ENCODE measurements at regions of chr20 and their contacts with region 1.

Region 1: GRCh38 chr20:9616833-9617489 is 102.6 kb downstream of the LAMP5 start:
- DNase-seq: no peak
- H3K4me3 ChIP-seq: no peak overlapping the region
- H3K27me3 ChIP-seq: peaks cover 10% of the 10 kb centered on the region
- CTCF ChIP-seq: peak; percentile 86

Region 2: GRCh38 chr20:9498322-9498721 is 118.6 kb before region 1 on chr20:
- CTCF ChIA-PET with region 1: no interaction called
- POLR2A ChIA-PET with region 1: no interaction called
- DNase-seq: no peak
- H3K4me3 ChIP-seq: no peak overlapping the region
- H3K27me3 ChIP-seq: peaks cover 2% of the 10 kb centered on the region; the same call in 1 of the 2 replicates
- CTCF ChIP-seq: no peak

Region 3: GRCh38 chr20:9597545-9597944 is 19.4 kb before region 1 on chr20:
- CTCF ChIA-PET with region 1: interaction called, 17 read pairs
- POLR2A ChIA-PET with region 1: no interaction called
- DNase-seq: no peak
- H3K4me3 ChIP-seq: no peak overlapping the region
- H3K27me3 ChIP-seq: no peaks in the 10 kb centered on the region
- CTCF ChIP-seq: no peak

Region 4: DNA sequence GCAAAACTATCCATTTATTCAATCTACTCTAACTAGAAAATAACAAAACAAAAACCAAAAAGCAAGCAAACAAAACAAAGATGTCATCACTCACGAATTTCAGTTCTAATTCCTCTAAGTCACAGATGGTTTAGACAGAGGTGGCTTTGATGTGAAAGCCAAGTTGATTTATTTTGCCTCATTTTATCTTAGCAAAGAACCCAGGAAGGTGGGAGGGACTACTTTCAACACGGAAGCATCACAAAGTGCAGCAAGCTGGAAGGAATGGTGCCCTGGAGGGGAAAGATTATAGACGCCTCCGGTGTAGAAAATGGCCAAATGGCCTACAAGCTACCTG is 14.1 kb before region 1 on chr20:
- CTCF ChIA-PET with region 1: interaction called, 17 read pairs
- POLR2A ChIA-PET with region 1: no interaction called
- DNase-seq: no peak
- H3K4me3 ChIP-seq: no peak overlapping the region
- H3K27me3 ChIP-seq: peaks cover 5% of the 10 kb centered on the region; the same call in 1 of the 2 replicates
- CTCF ChIP-seq: no peak

Region 5: GRCh38 chr20:9912858-9913434 is 296.0 kb after region 1 on chr20:
- CTCF ChIA-PET with region 1: interaction called, 138 read pairs
- POLR2A ChIA-PET with region 1: no interaction called
- DNase-seq: peak; percentile 1
- H3K4me3 ChIP-seq: no peak overlapping the region
- H3K27me3 ChIP-seq: no peaks in the 10 kb centered on the region; the same call in 1 of the 2 replicates
- CTCF ChIP-seq: peak; percentile 85

Region 6: GRCh38 chr20:9919271-9920014 is 302.5 kb after region 1 on chr20:
- CTCF ChIA-PET with region 1: interaction called, 138 read pairs
- POLR2A ChIA-PET with region 1: no interaction called
- DNase-seq: no peak
- H3K4me3 ChIP-seq: no peak overlapping the region
- H3K27me3 ChIP-seq: no peaks in the 10 kb centered on the region
- CTCF ChIP-seq: no peak

Region 7: DNA sequence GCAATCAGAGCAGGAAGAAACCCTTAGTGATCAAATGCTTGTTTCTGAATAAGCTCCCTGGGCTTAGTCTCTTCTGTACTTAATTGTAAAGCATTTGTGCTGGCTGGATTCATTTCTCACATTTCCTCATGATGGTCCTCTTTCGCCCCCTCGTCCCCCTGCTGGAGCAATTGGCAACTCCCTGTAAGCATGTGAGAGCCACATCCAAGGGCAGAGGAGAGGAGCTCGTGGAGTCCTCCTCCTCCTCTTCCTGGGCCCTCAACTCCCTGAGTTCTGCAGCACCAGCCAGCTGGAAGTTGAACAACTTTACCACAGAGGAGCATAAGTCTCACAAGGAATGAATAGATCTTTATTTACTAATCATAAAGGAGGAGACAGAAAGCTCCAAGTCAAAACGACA is 430.5 kb after region 1 on chr20:
- CTCF ChIA-PET with region 1: no interaction called
- POLR2A ChIA-PET with region 1: no interaction called
- DNase-seq: no peak
- H3K4me3 ChIP-seq: no peak overlapping the region
- H3K27me3 ChIP-seq: no peaks in the 10 kb centered on the region
- CTCF ChIP-seq: peak; percentile 20; the same call in 1 of the 2 replicates

Region 8: DNA sequence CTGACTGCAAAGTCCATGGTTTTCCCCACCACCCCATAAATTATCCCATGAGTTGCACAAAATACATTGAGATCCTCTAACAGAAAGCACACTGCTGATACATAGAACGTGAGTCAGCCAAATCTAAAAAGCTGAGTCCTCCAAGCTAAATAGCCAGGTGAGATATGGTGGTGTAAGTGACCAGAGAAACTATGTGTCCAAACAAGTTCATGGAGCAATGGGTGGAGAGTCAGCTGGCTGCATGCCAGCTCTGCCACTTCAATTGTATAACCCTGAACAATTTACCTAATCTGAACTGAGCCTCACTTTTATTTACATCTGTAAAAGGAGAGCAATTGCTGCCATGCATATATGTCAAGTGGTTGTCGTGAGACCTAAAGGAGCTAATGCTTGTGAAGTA is 611.4 kb after region 1 on chr20:
- CTCF ChIA-PET with region 1: no interaction called
- POLR2A ChIA-PET with region 1: no interaction called
- DNase-seq: no peak
- H3K4me3 ChIP-seq: no peak overlapping the region
- H3K27me3 ChIP-seq: no peaks in the 10 kb centered on the region; the same call in 1 of the 2 replicates
- CTCF ChIP-seq: no peak

Measured in BJ (cell line).